GM12878 (cell line): ENCODE measurements at regions of chr17 and their contacts with region 1.

Region 1: GRCh38 chr17:7460850-7461660 is 16.2 kb downstream of the CHRNB1 start:
- DNase-seq: no peak
- ATAC-seq: no peak
- H3K4me3 ChIP-seq: no peak overlapping the region
- H3K27ac ChIP-seq: no peak overlapping the region
- H3K4me1 ChIP-seq: peaks cover 3% of the 10 kb centered on the region; the same call in 1 of the 2 replicates
- H3K27me3 ChIP-seq: no peaks in the 10 kb centered on the region
- CTCF ChIP-seq: no peak
- EP300 ChIP-seq: no peak
- POLR2A ChIP-seq: no peak
- RAD21 ChIP-seq: no peak

Region 2: GRCh38 chr17:7478276-7479153 is 17.5 kb after region 1 on chr17:
- CTCF ChIA-PET with region 1: no interaction called
- POLR2A ChIA-PET with region 1: interaction called, 17 read pairs
- RAD21 ChIA-PET with region 1: no interaction called
- SMC1A ChIA-PET with region 1: interaction called, 3 read pairs
- in situ Hi-C with region 1: no loop called
- intact Hi-C with region 1: no loop called
- DNase-seq: no peak
- ATAC-seq: peak; percentile 46
- H3K4me3 ChIP-seq: peak overlapping the region; percentile 89
- H3K27ac ChIP-seq: peak overlapping the region; percentile 64
- H3K4me1 ChIP-seq: peaks cover 11% of the 10 kb centered on the region
- H3K27me3 ChIP-seq: no peaks in the 10 kb centered on the region
- CTCF ChIP-seq: no peak
- EP300 ChIP-seq: no peak
- POLR2A ChIP-seq: peak; percentile 52
- RAD21 ChIP-seq: no peak